OCI-LY7 (cell line): ENCODE measurements at regions of chr1 and their contacts with region 1.

Region 1: GRCh38 chr1:179002552-179003345 is 22.9 kb upstream of the FAM20B start:
- DNase-seq: peak; percentile 90
- H3K4me3 ChIP-seq: no peak overlapping the region
- H3K27ac ChIP-seq: peak overlapping the region; percentile 9
- H3K4me1 ChIP-seq: peaks cover 25% of the 10 kb centered on the region
- CTCF ChIP-seq: peak; percentile 97

Region 2: DNA sequence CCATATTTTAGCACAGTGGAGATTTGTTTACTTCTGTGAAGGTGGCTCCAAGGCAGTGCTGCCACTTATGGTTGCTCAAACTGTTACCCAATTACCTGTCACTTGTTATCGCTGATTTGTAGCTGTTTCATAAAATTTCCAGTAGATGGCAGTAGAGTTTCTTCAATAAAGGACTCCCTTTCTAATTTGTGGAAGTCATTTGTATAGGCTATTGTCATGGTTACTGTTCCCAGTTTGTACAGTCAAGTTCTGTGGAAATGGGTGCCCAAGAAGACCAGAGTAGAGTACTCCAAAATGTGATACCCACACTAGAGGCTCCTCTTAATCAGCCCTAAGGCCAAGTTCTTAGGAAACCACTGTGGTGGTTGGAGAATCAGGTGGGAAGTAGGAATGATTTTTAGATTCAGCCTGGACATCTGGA is 692.1 kb before region 1 on chr1:
- CTCF ChIA-PET with region 1: no interaction called
- POLR2A ChIA-PET with region 1: interaction called, 3 read pairs
- intact Hi-C with region 1: loop called (anchors 10 kb)
- DNase-seq: peak; percentile 70
- H3K4me3 ChIP-seq: no peak overlapping the region
- H3K27ac ChIP-seq: no peak overlapping the region
- H3K4me1 ChIP-seq: no peaks in the 10 kb centered on the region
- CTCF ChIP-seq: peak; percentile 90

Region 3: DNA sequence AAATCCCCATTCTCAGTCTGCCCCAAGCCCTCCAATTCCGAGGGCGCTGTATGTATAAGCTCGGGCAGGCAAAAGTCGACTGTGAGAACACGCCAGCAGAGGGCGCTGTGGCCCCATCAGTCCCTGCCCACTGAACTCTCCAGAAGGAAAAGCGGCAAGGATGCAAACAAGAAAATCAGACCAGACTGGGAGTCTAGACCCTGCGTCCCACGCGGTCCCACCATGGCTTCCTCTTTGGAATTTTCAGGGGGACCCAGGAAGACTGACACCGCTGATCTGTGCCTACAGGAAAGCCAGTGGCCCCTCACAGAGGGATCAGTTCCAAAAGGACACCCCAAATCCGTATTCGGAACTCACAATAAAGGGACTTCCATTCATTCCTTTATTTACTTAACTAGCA is 470.4 kb before region 1 on chr1:
- CTCF ChIA-PET with region 1: interaction called, 34 read pairs
- POLR2A ChIA-PET with region 1: interaction called, 5 read pairs
- intact Hi-C with region 1: loop called (anchors 1 kb)
- DNase-seq: peak; percentile 79
- H3K4me3 ChIP-seq: no peak overlapping the region
- H3K27ac ChIP-seq: no peak overlapping the region
- H3K4me1 ChIP-seq: no peaks in the 10 kb centered on the region
- CTCF ChIP-seq: peak; percentile 99

Region 4: DNA sequence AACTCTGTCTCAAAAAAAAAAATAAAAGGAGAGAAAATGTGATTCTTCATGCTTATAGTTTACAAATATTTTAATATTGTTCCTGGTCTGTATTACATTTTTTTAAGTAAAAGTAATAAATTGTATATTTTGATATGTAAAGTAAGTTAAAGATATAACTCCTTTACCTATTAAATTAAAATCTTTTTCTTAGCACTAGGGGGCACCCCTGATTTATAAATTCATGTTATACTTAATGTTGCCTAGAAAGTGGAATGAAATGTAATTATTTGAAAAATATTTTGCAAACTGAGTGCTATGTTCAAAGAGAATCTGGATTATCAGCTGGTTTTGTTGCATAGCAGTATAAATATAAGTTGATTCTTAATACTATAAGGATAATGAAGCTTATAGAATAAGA is 228.5 kb before region 1 on chr1:
- CTCF ChIA-PET with region 1: interaction called, 3 read pairs
- POLR2A ChIA-PET with region 1: interaction called, 4 read pairs
- intact Hi-C with region 1: loop called (anchors 1 kb)
- DNase-seq: peak; percentile 48
- H3K4me3 ChIP-seq: no peak overlapping the region
- H3K27ac ChIP-seq: no peak overlapping the region
- H3K4me1 ChIP-seq: no peaks in the 10 kb centered on the region
- CTCF ChIP-seq: peak; percentile 83

Region 5: GRCh38 chr1:179014123-179014522 is 11.4 kb after region 1 on chr1:
- CTCF ChIA-PET with region 1: interaction called, 7 read pairs
- POLR2A ChIA-PET with region 1: interaction called, 15 read pairs
- intact Hi-C with region 1: no loop called
- DNase-seq: no peak
- H3K4me3 ChIP-seq: no peak overlapping the region
- H3K27ac ChIP-seq: no peak overlapping the region
- H3K4me1 ChIP-seq: no peaks in the 10 kb centered on the region
- CTCF ChIP-seq: no peak

Region 6: GRCh38 chr1:179066471-179066870 is 63.7 kb after region 1 on chr1:
- CTCF ChIA-PET with region 1: interaction called, 8 read pairs
- POLR2A ChIA-PET with region 1: interaction called, 6 read pairs
- intact Hi-C with region 1: loop called (anchors 1 kb)
- DNase-seq: no peak
- H3K4me3 ChIP-seq: no peak overlapping the region
- H3K27ac ChIP-seq: no peak overlapping the region
- H3K4me1 ChIP-seq: peaks cover 18% of the 10 kb centered on the region
- CTCF ChIP-seq: no peak